ENCODE measurements at regions of chr2 and their contacts with region 1.

Region 1: DNA sequence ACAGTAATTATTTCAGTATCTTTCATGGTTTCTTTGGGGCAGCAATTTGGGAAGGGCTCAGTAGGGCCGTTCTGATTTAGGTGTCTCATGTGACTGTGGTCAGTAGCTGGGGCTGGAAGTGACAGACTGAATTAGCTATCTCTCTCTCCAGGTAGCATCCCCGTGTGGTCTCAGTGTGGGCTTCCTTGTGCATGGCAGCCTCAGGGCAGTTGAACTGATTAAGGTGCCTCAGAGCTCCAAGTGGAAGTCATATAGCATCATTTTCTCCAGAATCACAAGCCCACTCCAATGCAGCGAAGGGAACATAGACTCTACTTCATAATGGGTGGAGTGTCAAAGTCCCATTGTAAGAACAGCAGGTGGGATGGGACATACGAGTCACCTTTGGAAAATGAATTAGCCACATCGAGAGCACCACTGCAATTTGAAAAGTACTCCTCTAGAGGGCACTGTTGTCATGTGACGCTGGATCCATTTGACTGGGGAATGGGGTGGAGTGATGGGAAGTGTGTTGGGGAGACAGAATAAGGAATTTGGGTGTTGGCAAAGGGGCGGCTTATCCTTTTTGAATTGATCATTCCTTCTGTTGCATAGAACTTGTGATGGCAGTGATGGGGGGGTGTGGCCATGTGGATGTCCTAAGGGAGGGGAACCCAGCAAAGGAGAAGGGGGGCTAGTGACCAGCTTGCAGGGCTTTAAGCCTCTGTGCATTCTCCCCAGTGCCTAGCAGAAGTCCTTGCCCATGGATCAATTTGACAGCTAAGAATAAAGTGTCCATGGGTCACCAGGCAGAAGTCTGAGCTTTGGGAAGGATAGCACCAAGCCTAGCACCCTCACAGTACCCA is 39.3 kb upstream of the FAM136A start:
- DNase-seq: peak; percentile 54
- H3K4me3 Mint-ChIP-seq: no peak overlapping the region
- H3K27ac Mint-ChIP-seq: no peak overlapping the region
- H3K4me1 Mint-ChIP-seq: no peaks in the 10 kb centered on the region
- H3K27me3 Mint-ChIP-seq: peaks cover 49% of the 10 kb centered on the region

Region 2: DNA sequence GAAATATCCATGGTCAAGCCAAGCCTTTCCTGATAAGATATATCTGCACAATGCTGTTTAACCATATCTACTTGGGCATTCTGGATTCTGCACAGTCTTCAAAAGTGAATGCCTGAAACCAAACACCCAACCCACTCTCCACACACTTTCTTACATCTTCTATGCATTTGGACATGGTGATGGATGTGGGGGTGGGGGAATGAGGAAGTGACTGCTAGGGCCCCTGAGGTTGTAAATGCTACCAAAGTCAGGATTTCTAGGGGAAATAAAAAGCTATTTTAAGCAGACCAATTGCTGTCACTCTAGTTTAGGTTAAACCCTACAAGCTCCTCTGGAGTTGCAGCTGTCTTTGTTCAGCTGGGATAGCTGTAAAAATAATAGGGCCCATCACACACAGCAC is 239.2 kb after region 1 on chr2:
- CTCF ChIA-PET with region 1: no interaction called
- DNase-seq: no peak
- H3K4me3 Mint-ChIP-seq: no peak overlapping the region
- H3K27ac Mint-ChIP-seq: no peak overlapping the region
- H3K4me1 Mint-ChIP-seq: no peaks in the 10 kb centered on the region
- H3K27me3 Mint-ChIP-seq: peaks cover 7% of the 10 kb centered on the region

Region 3: GRCh38 chr2:70616168-70616694 is 275.1 kb after region 1 on chr2:
- CTCF ChIA-PET with region 1: interaction called, 85 read pairs
- DNase-seq: no peak
- H3K4me3 Mint-ChIP-seq: no peak overlapping the region
- H3K27ac Mint-ChIP-seq: no peak overlapping the region
- H3K4me1 Mint-ChIP-seq: peaks cover 3% of the 10 kb centered on the region
- H3K27me3 Mint-ChIP-seq: peaks cover 22% of the 10 kb centered on the region

Region 4: DNA sequence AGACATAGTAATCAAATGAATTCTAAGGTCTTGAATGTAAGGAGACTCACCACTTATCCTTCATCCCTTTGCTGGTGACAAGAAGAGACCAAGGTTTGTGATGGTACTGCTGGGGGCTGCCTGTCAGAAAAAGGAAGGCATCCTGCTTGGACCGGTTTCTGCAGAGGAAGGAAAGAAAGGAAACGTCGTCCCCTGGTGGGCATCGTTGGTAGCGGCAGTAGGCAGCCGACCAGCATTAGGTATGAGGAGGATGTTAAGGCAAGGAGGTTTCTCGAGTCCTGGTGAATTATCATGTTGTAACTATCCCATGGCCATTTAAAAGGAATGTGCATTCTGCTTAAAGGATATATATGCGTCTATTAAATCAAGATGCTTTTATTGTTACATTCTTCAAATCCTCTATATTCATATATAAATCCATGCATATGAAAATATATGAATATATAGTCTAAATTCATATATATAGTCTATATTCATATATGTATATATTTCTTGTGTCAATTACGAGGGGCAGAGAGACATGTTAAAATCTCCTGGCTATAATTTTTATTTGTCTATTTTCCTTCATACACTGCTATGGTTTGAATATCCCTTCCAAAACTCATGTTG is 306.8 kb after region 1 on chr2:
- CTCF ChIA-PET with region 1: interaction called, 19 read pairs
- DNase-seq: peak; percentile 85
- H3K4me3 Mint-ChIP-seq: no peak overlapping the region
- H3K27ac Mint-ChIP-seq: no peak overlapping the region
- H3K4me1 Mint-ChIP-seq: no peaks in the 10 kb centered on the region
- H3K27me3 Mint-ChIP-seq: peaks cover 19% of the 10 kb centered on the region

Measured in activated naive CD4-positive, alpha-beta T cell treated with anti-CD3 and anti-CD28 coated beads, Interleukin-2, amount 10 ng/mL, durations not matched to agents 7 days and 5 days (primary cell).